Right ventricle myocardium inferior (tissue), 1 donor: ENCODE measurements at regions of chr1 and their contacts with region 1.

Region 1: DNA sequence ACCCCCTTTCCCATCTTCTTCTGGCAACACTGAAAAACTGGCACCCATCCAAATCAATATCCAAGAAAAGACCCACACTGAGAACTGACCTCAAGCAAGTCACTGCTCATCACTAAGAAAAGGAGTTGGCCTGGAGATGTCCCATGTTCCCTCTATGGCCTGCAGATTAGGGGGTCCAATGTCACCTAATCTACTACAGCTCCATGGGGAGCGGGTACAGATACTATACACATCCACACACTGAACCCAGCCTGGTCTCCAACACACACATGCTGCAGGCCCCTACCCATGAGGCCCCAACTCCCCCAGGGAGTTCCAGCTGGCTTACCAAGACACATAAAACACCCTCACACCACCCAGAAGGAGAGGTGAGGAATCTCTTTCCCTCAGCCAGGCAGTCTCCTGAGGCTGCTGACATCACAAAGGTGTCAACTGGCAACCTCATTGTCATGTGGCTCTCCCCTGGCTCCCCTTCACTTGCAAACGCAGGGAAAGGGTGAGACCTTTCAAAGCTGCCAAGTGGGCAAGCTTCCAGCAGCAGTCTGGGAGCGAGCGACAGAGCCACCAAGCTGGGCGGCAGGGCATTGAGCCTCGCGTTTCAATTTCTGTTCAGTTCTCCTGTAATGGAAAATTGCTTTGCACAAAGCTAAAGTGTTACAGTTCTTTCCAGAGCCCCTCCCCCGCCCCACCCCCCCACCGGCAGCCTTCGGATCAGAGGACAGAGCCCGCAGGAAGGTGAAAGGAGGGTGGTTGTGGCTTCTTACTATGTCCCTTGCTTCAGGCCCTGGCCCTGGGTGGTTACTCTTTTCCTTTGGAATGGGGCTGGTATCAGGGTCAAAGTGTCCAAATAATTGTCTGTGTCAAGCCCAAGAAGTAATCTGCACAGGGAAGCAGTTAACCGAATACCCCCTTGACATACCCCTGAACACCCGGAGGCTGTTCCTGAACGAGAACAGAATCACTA is at the start of gene LRRC52:
- DNase-seq: peak; percentile 82
- ATAC-seq: peak; percentile 80
- total RNA-seq, gene LRRC52: 0.30 TPM

Region 2: GRCh38 chr1:165416876-165417275 is 126.9 kb before region 1 on chr1:
- intact Hi-C with region 1: loop called (anchors 5 kb)
- DNase-seq: peak; percentile 79
- ATAC-seq: peak; percentile 90

Region 3: DNA sequence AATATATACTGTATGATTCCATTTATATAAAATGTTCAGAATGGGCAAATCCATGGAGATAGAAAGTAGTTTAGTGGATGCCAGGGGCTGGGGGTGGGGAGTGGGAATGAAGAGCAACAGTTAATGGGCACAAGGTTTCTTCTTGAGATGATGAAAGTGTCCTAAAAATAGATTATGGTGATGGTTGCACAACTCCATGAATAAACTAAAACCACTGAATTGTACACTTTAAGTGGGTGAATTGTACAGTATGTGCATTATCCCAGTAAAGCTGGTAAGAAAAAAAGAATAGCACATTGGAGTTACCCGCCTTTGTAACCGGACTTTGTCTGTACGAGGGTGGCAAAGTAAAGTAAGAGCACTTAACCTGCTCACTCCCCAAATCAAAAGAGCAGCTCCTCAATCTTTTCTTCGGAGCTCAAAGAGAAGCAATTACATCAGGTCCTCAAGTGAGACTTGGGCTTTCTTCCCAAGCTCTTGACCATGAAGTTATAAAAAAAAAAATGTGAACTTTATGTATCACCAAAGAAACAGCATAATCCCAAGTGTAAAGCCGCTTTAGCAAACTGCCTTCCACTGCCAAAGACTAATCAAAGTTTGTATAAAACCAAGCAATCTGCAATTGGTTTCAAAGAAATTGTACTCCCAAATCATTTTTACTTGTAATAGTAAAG is 122.5 kb after region 1 on chr1:
- intact Hi-C with region 1: no loop called
- DNase-seq: no peak
- ATAC-seq: no peak